Activated B cell treated with CpG ODN at 0.5 μM for 24 hours (primary cell): ENCODE measurements at regions of chr17 and their contacts with region 1.

Region 1: DNA sequence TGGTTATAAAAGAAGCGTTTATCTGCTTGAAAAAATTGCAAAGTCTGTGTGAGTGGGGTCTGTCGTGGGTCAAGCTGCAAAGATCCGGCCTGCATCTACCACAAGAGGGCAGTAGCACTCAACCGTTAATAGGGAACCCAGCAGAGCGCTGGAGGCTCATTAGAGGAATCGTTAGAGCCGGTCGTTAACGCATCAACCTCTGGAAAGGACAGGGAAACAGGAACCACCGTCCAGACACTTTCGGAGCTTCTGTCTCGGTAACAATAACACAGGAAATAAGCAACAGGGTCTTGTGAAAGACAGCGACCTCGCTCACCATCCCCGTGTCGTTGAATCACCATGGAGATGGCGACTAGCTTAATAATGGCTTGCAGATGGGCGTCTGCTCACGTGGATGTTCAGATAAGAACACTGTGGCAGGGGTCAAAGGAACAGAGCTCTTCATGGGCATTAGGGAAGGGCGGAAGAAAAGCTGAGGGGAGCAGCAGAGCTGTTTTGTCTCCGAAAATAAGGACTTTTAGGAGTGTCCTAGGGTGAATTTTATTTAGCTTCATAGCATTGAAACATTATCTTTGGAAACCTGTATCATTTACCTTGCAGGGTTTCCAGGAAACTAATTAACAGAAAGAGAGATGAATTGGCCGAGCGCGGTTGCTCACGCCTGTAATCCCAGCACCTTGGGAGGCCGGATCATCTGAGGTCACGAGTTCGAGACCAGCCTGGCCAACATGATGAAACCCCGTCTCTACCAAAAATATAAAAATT is 11.9 kb upstream of the NSRP1 start:
- DNase-seq: peak; percentile 37
- ATAC-seq: peak; percentile 95
- H3K4me3 Mint-ChIP-seq: peak overlapping the region; percentile 86
- H3K27ac Mint-ChIP-seq: peak overlapping the region; percentile 37
- H3K4me1 Mint-ChIP-seq: peaks cover 10% of the 10 kb centered on the region
- H3K27me3 Mint-ChIP-seq: peaks cover 5% of the 10 kb centered on the region
- CTCF ChIP-seq: peak; percentile 65

Region 2: DNA sequence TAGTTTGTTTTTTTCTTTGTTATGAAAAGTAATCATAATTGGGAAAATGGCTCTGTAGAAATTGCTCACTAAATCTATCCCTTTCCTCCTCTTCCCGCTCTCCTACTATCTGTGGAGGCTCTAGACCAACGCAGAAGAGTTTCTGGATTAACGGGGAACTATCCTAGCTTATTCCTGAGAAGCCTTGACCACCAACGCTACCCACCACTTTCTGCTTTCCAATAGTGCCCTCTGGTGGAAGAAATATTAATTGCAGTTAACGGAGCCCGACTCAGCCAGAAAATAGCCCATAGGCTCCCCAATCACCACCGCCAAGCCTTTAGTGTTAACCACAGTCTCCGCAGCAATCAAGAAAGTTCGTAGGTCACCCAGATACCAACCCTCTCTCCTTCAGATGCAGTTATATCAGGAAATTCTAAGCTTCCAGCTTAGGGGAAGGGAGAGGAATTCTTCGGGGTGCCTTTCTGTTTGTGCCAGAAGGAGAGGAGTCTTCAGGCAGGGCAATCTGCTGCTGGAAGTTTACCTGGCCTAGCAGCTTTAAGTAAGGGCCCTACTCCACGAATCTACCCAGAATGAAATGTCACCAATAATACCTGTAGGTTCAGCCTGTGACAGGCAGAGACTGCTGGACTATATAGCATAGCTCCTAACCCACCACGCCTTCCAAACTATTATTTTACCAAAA is 11.2 kb before region 1 on chr17:
- CTCF ChIA-PET with region 1: interaction called, 14 read pairs
- POLR2A ChIA-PET with region 1: no interaction called
- intact Hi-C with region 1: no loop called
- DNase-seq: no peak
- ATAC-seq: peak; percentile 68
- H3K4me3 Mint-ChIP-seq: no peak overlapping the region
- H3K27ac Mint-ChIP-seq: no peak overlapping the region
- H3K4me1 Mint-ChIP-seq: peaks cover 10% of the 10 kb centered on the region
- H3K27me3 Mint-ChIP-seq: peaks cover 21% of the 10 kb centered on the region
- CTCF ChIP-seq: peak; percentile 64

Region 3: GRCh38 chr17:30116661-30117551 is 12.1 kb after region 1 on chr17 and contains the start of gene NSRP1:
- CTCF ChIA-PET with region 1: interaction called, 12 read pairs
- POLR2A ChIA-PET with region 1: interaction called, 6 read pairs
- intact Hi-C with region 1: no loop called
- DNase-seq: peak; percentile 84
- ATAC-seq: peak; percentile 96
- H3K4me3 Mint-ChIP-seq: peak within 1 kb of the TSS; percentile 97
- H3K27ac Mint-ChIP-seq: peak within 1 kb of the TSS; percentile 97
- H3K4me1 Mint-ChIP-seq: peaks cover 41% of the 10 kb centered on the region
- H3K27me3 Mint-ChIP-seq: no peaks in the 10 kb centered on the region
- CTCF ChIP-seq: no peak
- total RNA-seq, gene NSRP1: 35.3 and 44.2 TPM in 2 replicates

Region 4: DNA sequence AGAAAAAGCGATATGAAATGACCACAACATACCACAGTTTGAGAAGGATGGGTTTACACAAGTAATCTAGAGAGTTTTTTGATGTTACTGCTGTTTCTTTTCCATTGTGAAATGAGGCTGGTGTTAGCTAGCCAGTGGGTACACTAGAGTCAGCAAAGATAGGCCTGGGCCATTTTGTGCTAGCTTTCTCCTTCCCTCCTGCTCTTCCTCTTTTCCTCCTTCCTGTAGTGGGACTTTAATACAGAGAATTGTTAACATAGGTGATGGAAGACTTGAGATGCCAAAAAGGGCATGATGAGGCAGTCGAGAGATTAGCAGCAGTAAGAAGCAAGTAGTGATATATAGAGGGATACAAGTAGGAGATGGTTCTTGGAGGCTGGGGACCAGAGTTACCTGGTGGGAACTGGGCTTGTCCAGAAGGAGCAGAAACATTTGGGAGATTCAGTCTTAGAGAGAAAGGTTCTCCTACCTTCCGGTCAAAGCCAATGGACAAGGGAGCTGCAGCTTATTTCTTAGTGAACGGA is 19.6 kb after region 1 on chr17:
- CTCF ChIA-PET with region 1: interaction called, 32 read pairs
- POLR2A ChIA-PET with region 1: no interaction called
- intact Hi-C with region 1: loop called (anchors 1 kb)
- DNase-seq: no peak
- ATAC-seq: no peak
- H3K4me3 Mint-ChIP-seq: no peak overlapping the region
- H3K27ac Mint-ChIP-seq: no peak overlapping the region
- H3K4me1 Mint-ChIP-seq: peaks cover 37% of the 10 kb centered on the region
- H3K27me3 Mint-ChIP-seq: no peaks in the 10 kb centered on the region
- CTCF ChIP-seq: no peak

Region 5: GRCh38 chr17:30236766-30237165 is 132.0 kb after region 1 on chr17:
- CTCF ChIA-PET with region 1: interaction called, 9 read pairs
- POLR2A ChIA-PET with region 1: no interaction called
- intact Hi-C with region 1: loop called (anchors 10 kb)
- DNase-seq: no peak
- ATAC-seq: no peak
- H3K4me3 Mint-ChIP-seq: peak overlapping the region; percentile 29
- H3K27ac Mint-ChIP-seq: no peak overlapping the region
- H3K4me1 Mint-ChIP-seq: peaks cover 21% of the 10 kb centered on the region
- H3K27me3 Mint-ChIP-seq: peaks cover 60% of the 10 kb centered on the region
- CTCF ChIP-seq: no peak

Region 6: DNA sequence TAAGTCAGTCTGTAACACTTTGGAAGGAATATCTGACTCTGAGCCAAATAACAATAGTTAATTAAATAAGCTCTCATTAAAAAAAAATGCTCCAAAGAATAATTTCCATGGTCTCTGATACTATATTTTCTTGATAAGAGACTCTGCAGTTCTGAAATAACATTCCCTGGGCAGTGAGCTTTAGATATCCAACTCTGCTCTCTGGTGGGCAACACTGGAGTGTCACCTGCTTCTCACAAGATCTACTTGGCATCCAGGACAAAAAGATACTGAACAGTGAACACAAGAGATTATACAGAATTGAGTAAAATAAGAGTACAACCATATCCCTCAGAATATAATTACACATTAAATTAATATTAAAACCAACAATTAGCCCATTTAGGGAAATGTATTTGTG is 173.3 kb after region 1 on chr17:
- CTCF ChIA-PET with region 1: interaction called, 6 read pairs
- POLR2A ChIA-PET with region 1: no interaction called
- intact Hi-C with region 1: loop called (anchors 1 kb)
- DNase-seq: no peak
- ATAC-seq: no peak
- H3K4me3 Mint-ChIP-seq: no peak overlapping the region
- H3K27ac Mint-ChIP-seq: no peak overlapping the region
- H3K4me1 Mint-ChIP-seq: peaks cover 4% of the 10 kb centered on the region
- H3K27me3 Mint-ChIP-seq: no peaks in the 10 kb centered on the region
- CTCF ChIP-seq: no peak

Region 7: DNA sequence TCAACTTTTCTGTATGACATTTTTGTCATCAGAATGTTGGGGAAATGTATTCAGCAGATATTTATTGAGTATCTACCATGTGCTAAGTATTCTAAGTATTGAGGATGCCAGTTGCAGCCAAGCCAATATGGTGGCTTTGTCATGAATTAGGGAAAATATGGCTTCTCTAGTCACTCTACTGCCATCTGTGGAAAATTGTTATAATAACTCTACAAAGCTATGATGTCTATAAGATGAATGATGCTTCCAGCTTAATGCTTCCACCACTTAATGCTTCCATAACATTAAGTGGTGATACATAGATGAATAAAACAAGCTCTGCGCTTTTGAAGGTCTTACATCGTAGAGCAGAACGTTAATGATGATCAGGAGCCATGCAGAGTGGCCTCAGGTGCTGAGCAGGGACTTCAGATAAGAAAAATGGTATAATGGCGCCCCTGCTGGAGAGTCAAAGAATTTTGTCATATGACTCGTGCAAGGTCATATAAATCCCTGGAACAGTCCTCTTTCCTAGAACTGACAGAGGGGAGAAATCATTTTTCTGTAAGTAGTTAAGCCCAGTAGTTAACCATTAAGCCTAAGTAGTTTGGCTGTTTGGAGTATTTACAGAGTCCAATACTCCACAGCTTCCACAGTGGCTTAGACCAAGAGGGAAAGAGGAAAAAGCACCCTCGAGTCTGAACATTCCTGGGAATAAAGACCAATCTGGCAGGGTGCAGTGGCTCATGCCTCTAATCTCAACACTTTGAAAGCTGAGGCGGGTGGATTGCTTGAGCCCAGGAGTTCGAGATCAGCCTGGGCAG is 231.8 kb after region 1 on chr17:
- CTCF ChIA-PET with region 1: interaction called, 172 read pairs
- POLR2A ChIA-PET with region 1: interaction called, 5 read pairs
- intact Hi-C with region 1: loop called (anchors 1 kb)
- DNase-seq: no peak
- ATAC-seq: peak; percentile 51
- H3K4me3 Mint-ChIP-seq: no peak overlapping the region
- H3K27ac Mint-ChIP-seq: no peak overlapping the region
- H3K4me1 Mint-ChIP-seq: peaks cover 19% of the 10 kb centered on the region
- H3K27me3 Mint-ChIP-seq: peaks cover 6% of the 10 kb centered on the region
- CTCF ChIP-seq: peak; percentile 32